BJ (cell line): ENCODE measurements at regions of chr2 and their contacts with region 1.

Region 1: GRCh38 chr2:232476045-232476560 is 11.5 kb downstream of the ECEL1 start:
- DNase-seq: no peak
- H3K4me3 ChIP-seq: no peak overlapping the region
- H3K27me3 ChIP-seq: peaks cover 16% of the 10 kb centered on the region
- CTCF ChIP-seq: no peak

Region 2: DNA sequence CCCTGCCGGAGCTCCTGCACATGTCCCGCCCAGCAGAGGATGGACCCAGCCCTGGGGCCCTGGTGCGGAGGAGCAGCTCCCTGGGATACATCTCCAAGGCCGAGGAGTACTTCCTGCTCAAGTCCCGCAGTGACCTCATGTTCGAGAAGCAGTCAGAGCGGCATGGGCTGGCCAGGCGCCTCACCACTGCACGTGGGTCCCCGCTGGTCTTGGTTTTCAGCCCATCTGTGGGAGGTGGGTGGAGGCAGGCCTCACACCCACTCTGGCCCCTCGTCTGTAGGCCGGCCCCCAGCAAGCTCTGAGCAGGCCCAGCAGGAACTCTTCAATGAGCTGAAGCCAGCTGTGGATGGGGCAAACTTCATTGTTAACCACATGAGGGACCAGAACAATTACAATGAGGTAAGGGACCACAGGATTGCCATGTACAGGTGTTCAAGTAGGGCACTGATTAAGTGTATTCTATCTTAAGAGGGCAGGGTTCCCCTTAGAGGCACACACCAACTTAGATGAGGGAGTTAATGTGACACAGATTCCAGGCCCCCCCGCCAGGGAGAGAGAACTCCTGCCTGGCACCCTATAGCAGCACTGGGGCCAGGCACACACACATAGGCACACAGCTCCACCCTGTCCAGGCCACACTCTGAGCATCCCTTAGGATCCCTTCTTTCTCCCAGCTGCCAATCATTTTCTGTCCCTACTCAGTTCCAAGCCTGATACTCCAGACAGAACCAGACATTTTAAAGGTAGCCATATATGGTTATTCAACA is 58.0 kb after region 1 on chr2:
- CTCF ChIA-PET with region 1: no interaction called
- POLR2A ChIA-PET with region 1: interaction called, 10 read pairs
- DNase-seq: no peak
- H3K4me3 ChIP-seq: no peak overlapping the region
- H3K27me3 ChIP-seq: no peaks in the 10 kb centered on the region; the same call in none of the 2 replicates
- CTCF ChIP-seq: no peak

Region 3: GRCh38 chr2:232632908-232633732 is 157.0 kb after region 1 on chr2 and contains the start of gene EFHD1:
- CTCF ChIA-PET with region 1: no interaction called
- POLR2A ChIA-PET with region 1: no interaction called
- DNase-seq: peak; percentile 35
- H3K4me3 ChIP-seq: peak within 1 kb of the TSS; percentile 55
- H3K27me3 ChIP-seq: peaks cover 2% of the 10 kb centered on the region; the same call in 1 of the 2 replicates
- CTCF ChIP-seq: no peak
- polyA plus RNA-seq, gene EFHD1: 60.0 and 76.5 TPM in 2 replicates